ENCODE measurements at regions of chr18 and their contacts with region 1.

Region 1: DNA sequence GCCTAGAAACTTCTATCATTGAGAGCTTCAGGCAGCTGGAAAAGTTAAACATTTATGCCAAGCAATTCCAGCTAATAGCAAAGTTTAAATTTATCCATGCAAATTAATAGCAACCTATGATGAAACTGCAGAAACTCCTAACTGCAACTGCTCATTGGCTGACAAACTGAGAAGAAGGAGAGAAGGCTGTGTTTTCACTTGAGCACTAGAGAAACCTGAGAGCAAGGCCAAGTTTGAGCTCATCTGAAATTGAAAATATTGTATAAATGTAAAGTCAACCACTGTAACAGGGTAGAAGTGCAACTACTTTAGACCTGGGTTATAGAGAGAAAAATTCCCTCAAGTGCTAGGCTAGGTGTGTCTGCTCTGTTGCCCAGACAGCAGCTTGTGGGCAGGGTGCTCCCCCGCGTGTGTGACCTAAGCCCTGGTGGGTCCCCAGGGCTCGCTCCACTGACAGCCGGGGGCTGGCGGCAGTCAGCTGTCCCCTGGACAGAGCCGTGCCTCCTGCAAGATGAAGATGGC is 50.2 kb downstream of the CABYR start:
- DNase-seq: no peak
- ATAC-seq: no peak
- H3K4me3 ChIP-seq: no peak overlapping the region
- H3K27ac ChIP-seq: no peak overlapping the region
- H3K4me1 ChIP-seq: no peaks in the 10 kb centered on the region
- CTCF ChIP-seq: no peak
- EP300 ChIP-seq: no peak
- POLR2A ChIP-seq: no peak
- RAD21 ChIP-seq: no peak

Region 2: GRCh38 chr18:24176727-24177416 is 12.2 kb before region 1 on chr18:
- CTCF ChIA-PET with region 1: interaction called, 19 read pairs
- POLR2A ChIA-PET with region 1: no interaction called
- DNase-seq: peak; percentile 13 to 55
- ATAC-seq: peak; percentile 81 to 86; a peak in 5 of 6 replicates
- H3K4me3 ChIP-seq: no peak overlapping the region
- H3K27ac ChIP-seq: no peak overlapping the region
- H3K4me1 ChIP-seq: peaks cover 9% of the 10 kb centered on the region; the same call in 1 of the 3 replicates
- CTCF ChIP-seq: peak; percentile 59
- EP300 ChIP-seq: no peak
- POLR2A ChIP-seq: no peak
- RAD21 ChIP-seq: peak; percentile 52 to 56

Region 3: DNA sequence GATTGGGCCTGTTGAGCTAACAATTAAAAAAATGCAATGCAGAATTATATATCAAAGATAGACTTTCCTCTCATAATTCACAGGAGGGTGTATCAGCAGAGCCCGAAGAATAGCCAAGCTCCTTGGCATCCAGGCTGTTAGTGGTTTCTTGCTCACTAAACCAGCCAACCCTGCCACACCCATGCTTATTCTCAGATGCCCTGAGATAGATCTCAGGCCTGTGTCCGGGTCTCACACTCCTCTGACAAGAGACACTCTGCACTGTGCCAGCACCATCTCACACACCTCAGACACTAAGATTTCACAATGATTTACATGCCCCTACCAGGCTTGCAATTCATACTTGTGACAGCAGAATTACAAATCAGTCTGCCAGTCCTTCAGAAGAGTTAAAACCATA is 144.0 kb after region 1 on chr18:
- CTCF ChIA-PET with region 1: no interaction called
- POLR2A ChIA-PET with region 1: no interaction called
- DNase-seq: no peak
- ATAC-seq: no peak
- H3K4me3 ChIP-seq: no peak overlapping the region
- H3K27ac ChIP-seq: no peak overlapping the region
- H3K4me1 ChIP-seq: no peaks in the 10 kb centered on the region
- CTCF ChIP-seq: no peak
- EP300 ChIP-seq: no peak
- POLR2A ChIP-seq: no peak
- RAD21 ChIP-seq: no peak

Region 4: DNA sequence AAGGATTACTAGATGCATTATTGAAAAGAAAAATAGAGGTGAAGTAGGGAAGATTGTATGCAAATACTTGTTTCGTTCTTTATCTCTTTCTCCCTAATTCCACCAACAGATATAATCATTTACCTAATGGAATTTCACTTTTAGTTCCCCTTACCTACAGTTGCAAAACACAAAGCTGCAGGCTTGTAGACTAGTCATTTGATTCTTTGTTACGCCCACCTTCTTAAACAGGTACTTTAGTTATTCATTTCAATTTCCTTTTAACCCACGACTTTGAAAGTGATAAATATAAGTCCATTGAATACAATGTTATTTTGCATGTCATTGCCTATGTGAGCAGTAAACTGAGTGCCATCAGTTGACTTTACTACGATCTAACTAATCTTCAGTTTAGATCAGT is 267.5 kb after region 1 on chr18:
- CTCF ChIA-PET with region 1: no interaction called
- POLR2A ChIA-PET with region 1: no interaction called
- DNase-seq: no peak
- ATAC-seq: no peak
- H3K4me3 ChIP-seq: no peak overlapping the region
- H3K27ac ChIP-seq: no peak overlapping the region
- H3K4me1 ChIP-seq: no peaks in the 10 kb centered on the region
- CTCF ChIP-seq: no peak
- EP300 ChIP-seq: no peak
- POLR2A ChIP-seq: no peak
- RAD21 ChIP-seq: no peak